HepG2 (cell line): ENCODE measurements at regions of chr17 and their contacts with region 1.

Region 1: DNA sequence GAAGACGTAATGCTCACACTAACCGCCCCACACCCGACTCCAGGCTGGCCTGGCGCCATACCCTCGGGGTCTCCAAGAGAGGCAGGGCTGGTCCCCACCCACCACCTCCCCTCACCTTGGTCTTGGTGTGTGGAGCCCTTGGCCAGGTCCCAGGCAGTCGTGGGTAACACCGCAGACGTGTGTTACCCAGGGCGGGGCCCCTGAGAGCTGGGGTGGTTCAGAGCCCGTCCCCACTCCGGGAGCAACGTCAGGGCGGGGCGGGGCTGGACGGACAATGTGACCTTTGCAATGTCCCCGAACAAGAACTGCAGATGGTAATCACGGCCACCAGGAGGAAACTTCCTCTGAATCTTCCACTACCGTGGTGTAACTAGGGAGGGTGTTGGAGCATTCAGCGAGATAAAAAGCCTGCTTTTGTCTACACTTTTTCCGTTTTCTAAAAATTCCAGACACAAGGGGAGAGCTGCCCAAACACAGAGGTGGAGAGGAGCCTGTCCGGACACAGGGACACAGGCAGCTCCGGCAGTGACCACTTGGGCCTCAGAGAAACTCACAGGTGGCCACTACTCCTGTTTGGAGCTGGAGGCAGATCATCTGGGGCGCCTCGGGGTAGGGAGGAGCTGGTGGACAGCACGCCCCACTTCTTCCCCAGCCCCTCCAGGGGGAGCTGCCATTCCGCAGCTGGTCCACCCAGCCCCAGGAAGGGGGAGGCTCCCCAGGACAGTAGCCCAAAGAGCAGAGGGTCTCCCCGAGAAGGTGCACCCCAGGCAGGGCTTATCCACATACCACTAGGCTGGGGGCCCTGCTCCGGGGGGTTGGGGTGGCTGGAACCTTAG is 14.2 kb upstream of the SLC38A10 start:
- DNase-seq: peak; percentile 91
- ATAC-seq: peak; percentile 78
- H3K4me3 ChIP-seq: peak overlapping the region; percentile 47 to 69 (median 50); a peak in 5 of 6 replicates
- H3K27ac ChIP-seq: peak overlapping the region; percentile 32
- H3K4me1 ChIP-seq: peaks cover 53% of the 10 kb centered on the region
- H3K27me3 ChIP-seq: peaks cover 19 to 53% of the 10 kb centered on the region in 2 experiments
- CTCF ChIP-seq: peak; percentile 68
- EP300 ChIP-seq: no peak
- POLR2A ChIP-seq: no peak
- RAD21 ChIP-seq: peak; percentile 83

Region 2: DNA sequence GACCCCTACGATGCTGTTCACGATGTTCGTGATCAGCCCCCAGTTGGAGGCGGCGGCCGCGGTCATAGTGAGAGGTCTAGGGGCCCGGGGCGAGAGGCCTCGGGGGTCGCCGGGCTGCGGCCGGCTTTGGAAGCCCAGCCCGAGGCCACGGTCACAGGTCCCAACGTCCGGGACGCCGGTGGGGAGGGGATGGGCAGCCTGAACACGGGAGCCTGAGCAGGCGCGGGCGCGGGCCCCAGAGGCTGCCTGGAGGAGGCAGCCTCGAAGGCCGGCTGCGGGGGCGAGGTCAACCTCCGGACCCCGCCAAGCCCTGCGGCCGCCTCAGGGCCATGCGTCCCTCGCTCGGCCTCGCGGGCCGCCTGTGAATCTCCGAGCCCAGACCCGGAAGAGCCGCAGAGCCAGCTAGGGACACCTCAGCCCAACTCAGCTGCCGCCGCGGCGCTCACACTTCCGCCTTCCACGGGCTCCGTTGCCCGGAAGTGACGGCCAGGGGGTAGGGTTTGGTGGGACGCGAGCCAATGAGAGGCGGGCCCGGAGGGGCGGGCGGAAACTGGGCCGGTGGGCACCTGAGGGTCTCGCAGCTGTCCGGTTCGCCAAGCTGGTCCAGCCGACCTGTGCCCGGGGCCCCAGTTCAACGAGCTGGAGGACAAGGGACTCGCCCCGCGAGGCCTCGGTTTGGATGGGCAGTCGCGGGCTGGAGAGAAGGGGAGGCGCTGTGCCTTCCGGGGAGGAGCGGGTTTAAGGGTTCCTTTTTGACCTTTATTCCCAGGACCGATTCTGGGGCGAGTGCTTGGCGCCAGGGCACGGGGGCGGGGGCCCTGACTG is 14.2 kb before region 1 on chr17 and contains the start of gene SLC38A10:
- CTCF ChIA-PET with region 1: no interaction called
- POLR2A ChIA-PET with region 1: interaction called, 23 read pairs
- in situ Hi-C with region 1: no loop called
- intact Hi-C with region 1: no loop called
- DNase-seq: peak; percentile 88
- ATAC-seq: peak; percentile 94
- H3K4me3 ChIP-seq: peak within 1 kb of the TSS; percentile 87 to 96 (median 90)
- H3K27ac ChIP-seq: peak within 1 kb of the TSS; percentile 86
- H3K4me1 ChIP-seq: peaks cover 49% of the 10 kb centered on the region
- H3K27me3 ChIP-seq: peaks cover 0 to 8% of the 10 kb centered on the region in 2 experiments; a peak in 2 of 5 replicates
- CTCF ChIP-seq: no peak; the same call in none of the 2 replicates
- EP300 ChIP-seq: no peak
- POLR2A ChIP-seq: peak; percentile 91 to 96
- RAD21 ChIP-seq: peak; percentile 8
- total RNA-seq, gene SLC38A10: 23.0 and 55.8 TPM in 2 replicates

Region 3: GRCh38 chr17:81328978-81329919 is 20.0 kb after region 1 on chr17:
- CTCF ChIA-PET with region 1: interaction called, 3 read pairs
- POLR2A ChIA-PET with region 1: interaction called, 13 read pairs
- in situ Hi-C with region 1: no loop called
- intact Hi-C with region 1: no loop called
- DNase-seq: peak; percentile 79
- ATAC-seq: peak; percentile 81
- H3K4me3 ChIP-seq: peak overlapping the region; percentile 38 to 72 (median 45); a peak in 5 of 6 replicates
- H3K27ac ChIP-seq: no peak overlapping the region
- H3K4me1 ChIP-seq: peaks cover 77% of the 10 kb centered on the region
- H3K27me3 ChIP-seq: peaks cover 18 to 78% of the 10 kb centered on the region in 2 experiments
- CTCF ChIP-seq: peak; percentile 35
- EP300 ChIP-seq: no peak
- POLR2A ChIP-seq: no peak
- RAD21 ChIP-seq: no peak

Region 4: DNA sequence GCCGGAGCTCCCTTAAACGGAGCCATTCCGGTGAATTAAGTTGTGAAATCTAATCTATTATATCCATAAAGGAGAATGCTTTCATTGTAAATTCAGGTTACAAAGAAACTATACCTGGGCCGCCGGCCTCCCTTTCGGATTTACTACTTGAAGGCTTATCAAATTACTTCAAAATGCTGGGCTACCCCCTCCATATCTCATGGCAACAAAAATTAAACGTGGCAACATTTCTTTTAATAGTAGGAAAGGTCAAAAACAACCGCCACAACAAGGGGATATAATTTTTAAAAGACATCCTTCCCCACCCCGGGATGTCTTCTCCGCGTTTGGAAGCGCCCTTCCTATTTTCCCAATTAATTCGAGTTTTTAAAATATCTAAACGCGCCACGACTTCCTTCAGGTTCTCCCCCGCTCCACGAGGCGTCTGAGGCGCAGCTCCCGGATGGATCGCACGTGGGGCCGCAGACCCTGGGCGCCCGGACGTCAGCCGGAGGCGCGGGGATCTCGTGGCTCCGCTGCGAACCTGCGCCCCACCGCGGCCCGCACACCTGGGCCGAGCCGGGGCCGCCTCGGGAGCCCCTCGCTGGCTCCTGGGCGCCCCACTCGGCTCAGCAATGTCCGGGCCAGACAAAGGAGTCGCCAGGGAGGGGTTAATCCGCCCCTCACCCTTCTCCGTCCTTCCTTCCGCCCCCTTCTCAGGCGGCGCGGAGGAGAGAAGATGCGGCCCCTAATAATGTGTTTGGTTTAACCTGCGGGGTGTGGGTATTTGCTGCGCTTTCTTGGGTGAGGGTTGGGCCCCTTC is 33.2 kb after region 1 on chr17:
- CTCF ChIA-PET with region 1: no interaction called
- POLR2A ChIA-PET with region 1: no interaction called
- in situ Hi-C with region 1: no loop called
- intact Hi-C with region 1: no loop called
- DNase-seq: no peak
- ATAC-seq: no peak
- H3K4me3 ChIP-seq: peak overlapping the region; percentile 67 to 81 (median 75)
- H3K27ac ChIP-seq: no peak overlapping the region
- H3K4me1 ChIP-seq: peaks cover 85% of the 10 kb centered on the region
- H3K27me3 ChIP-seq: peaks cover 5 to 48% of the 10 kb centered on the region in 2 experiments; a peak in 4 of 5 replicates
- CTCF ChIP-seq: no peak
- EP300 ChIP-seq: no peak
- POLR2A ChIP-seq: no peak
- RAD21 ChIP-seq: no peak

Region 5: GRCh38 chr17:81371910-81372760 is 62.8 kb after region 1 on chr17:
- CTCF ChIA-PET with region 1: no interaction called
- POLR2A ChIA-PET with region 1: no interaction called
- in situ Hi-C with region 1: no loop called
- intact Hi-C with region 1: no loop called
- DNase-seq: no peak
- ATAC-seq: peak; percentile 82
- H3K4me3 ChIP-seq: peak overlapping the region in 1 of 3 experiments; percentile 55; a peak in 1 of 6 replicates
- H3K27ac ChIP-seq: no peak overlapping the region
- H3K4me1 ChIP-seq: peaks cover 31% of the 10 kb centered on the region
- H3K27me3 ChIP-seq: peaks cover 9 to 64% of the 10 kb centered on the region in 2 experiments; a peak in 3 of 5 replicates
- CTCF ChIP-seq: peak; percentile 63
- EP300 ChIP-seq: no peak
- POLR2A ChIP-seq: no peak
- RAD21 ChIP-seq: peak; percentile 64; the same call in 1 of the 2 replicates

Region 6: GRCh38 chr17:81387100-81388090 is 78.1 kb after region 1 on chr17:
- CTCF ChIA-PET with region 1: no interaction called
- POLR2A ChIA-PET with region 1: no interaction called
- in situ Hi-C with region 1: no loop called
- intact Hi-C with region 1: loop called (anchors 5 kb)
- DNase-seq: no peak
- ATAC-seq: peak; percentile 14
- H3K4me3 ChIP-seq: peak overlapping the region; percentile 68 to 76 (median 70)
- H3K27ac ChIP-seq: peak overlapping the region; percentile 38
- H3K4me1 ChIP-seq: peaks cover 73% of the 10 kb centered on the region
- H3K27me3 ChIP-seq: peaks cover 14 to 88% of the 10 kb centered on the region in 2 experiments
- CTCF ChIP-seq: no peak
- EP300 ChIP-seq: no peak
- POLR2A ChIP-seq: no peak
- RAD21 ChIP-seq: no peak